CD8-positive, alpha-beta T cell (primary cell): ENCODE measurements at regions of chr2 and their contacts with region 1.

Region 1: GRCh38 chr2:47984041-47984440 is 77.7 kb upstream of the FBXO11 start:
- DNase-seq: no peak
- ATAC-seq: no peak
- H3K4me3 ChIP-seq: no peak overlapping the region
- H3K4me3 Mint-ChIP-seq: no peak overlapping the region
- H3K27ac ChIP-seq: no peak overlapping the region
- H3K27ac Mint-ChIP-seq: no peak overlapping the region
- H3K4me1 ChIP-seq: no peaks in the 10 kb centered on the region
- H3K4me1 Mint-ChIP-seq: no peaks in the 10 kb centered on the region
- H3K27me3 ChIP-seq: no peaks in the 10 kb centered on the region
- H3K27me3 Mint-ChIP-seq: no peaks in the 10 kb centered on the region
- CTCF ChIP-seq: no peak

Region 2: DNA sequence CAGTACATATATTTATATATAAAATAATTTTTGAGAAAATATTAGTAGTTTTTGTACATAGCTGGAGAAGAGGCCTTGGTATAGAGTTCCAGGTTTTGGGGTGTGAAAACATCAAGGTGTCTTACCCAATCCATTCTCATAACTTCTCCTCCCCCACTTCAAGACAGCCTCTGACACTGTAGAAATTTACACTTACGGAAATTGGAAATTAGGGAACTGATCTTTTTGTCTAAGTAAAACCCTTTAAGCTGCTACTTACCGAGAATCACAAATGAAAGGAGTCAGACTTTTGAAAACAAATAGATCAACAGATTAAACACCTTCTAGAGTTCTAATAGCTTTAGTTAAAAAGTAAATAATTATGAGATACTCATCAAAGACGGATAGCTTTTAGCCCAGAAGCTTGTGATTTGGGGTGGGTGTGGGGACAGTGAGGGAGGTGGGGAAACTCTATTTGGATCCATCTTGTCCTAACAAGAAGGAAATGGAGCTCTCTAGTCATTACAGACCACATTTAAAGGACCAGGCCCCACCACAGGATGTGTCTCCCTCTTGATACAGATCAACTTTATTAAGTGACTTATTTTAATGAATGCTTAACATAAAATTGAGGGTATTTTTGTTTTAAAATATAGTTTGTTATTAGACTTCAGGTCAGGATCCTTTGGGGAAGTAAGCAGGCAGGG is 66.6 kb before region 1 on chr2:
- CTCF ChIA-PET with region 1: no interaction called
- POLR2A ChIA-PET with region 1: no interaction called
- intact Hi-C with region 1: loop called in 1 of 2 experiments (anchors 5 kb)
- DNase-seq: no peak
- ATAC-seq: no peak
- H3K4me3 ChIP-seq: no peak overlapping the region
- H3K4me3 Mint-ChIP-seq: no peak overlapping the region
- H3K27ac ChIP-seq: no peak overlapping the region
- H3K27ac Mint-ChIP-seq: no peak overlapping the region
- H3K4me1 ChIP-seq: no peaks in the 10 kb centered on the region
- H3K4me1 Mint-ChIP-seq: peaks cover 9% of the 10 kb centered on the region
- H3K27me3 ChIP-seq: no peaks in the 10 kb centered on the region
- H3K27me3 Mint-ChIP-seq: no peaks in the 10 kb centered on the region
- CTCF ChIP-seq: no peak

Region 3: GRCh38 chr2:47996808-47997207 is 12.8 kb after region 1 on chr2:
- CTCF ChIA-PET with region 1: no interaction called
- POLR2A ChIA-PET with region 1: no interaction called
- intact Hi-C with region 1: no loop called
- DNase-seq: no peak
- ATAC-seq: no peak
- H3K4me3 ChIP-seq: no peak overlapping the region
- H3K4me3 Mint-ChIP-seq: no peak overlapping the region
- H3K27ac ChIP-seq: no peak overlapping the region
- H3K27ac Mint-ChIP-seq: no peak overlapping the region
- H3K4me1 ChIP-seq: no peaks in the 10 kb centered on the region
- H3K4me1 Mint-ChIP-seq: no peaks in the 10 kb centered on the region
- H3K27me3 ChIP-seq: no peaks in the 10 kb centered on the region
- H3K27me3 Mint-ChIP-seq: peaks cover 6% of the 10 kb centered on the region
- CTCF ChIP-seq: no peak